ENCODE measurements at regions of chr12 and their contacts with region 1.

Region 1: GRCh38 chr12:27635349-27635972 is 60.8 kb upstream of the REP15 start:
- DNase-seq: peak; percentile 80
- ATAC-seq: peak; percentile 60
- H3K4me3 ChIP-seq: no peak overlapping the region
- H3K27ac ChIP-seq: 0 out of 2 replicates have a peak overlapping the region, but pooled peaks have one; percentile 5
- H3K4me1 ChIP-seq: 0 out of 2 replicates have a peak, but pooled peaks cover 2% of the 10 kb centered on the region
- H3K27me3 ChIP-seq: no peaks in the 10 kb centered on the region
- CTCF ChIP-seq: peak; percentile 84

Region 2: DNA sequence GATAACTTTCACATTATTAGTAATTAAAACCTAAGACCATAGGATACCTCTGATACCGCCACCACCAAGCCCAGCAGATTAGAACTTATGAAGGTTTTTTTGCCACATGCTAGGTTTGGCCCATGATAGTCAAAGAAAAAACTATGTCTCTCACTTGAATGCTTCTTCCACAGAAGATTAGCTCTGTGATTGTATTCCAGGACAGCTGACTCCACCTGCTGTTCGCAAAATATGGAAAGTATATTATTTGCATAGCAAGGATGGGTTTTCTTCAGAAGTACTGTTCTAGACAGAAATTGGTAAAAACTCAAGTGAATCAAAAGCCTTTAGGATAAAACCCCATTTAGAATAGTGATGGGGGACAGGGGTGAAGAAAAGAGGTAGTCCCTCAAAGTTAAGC is 69.3 kb before region 1 on chr12:
- CTCF ChIA-PET with region 1: no interaction called
- POLR2A ChIA-PET with region 1: interaction called, 3 read pairs
- intact Hi-C with region 1: loop called (anchors 2 kb)
- DNase-seq: peak; percentile 27
- ATAC-seq: peak; percentile 41
- H3K4me3 ChIP-seq: no peak overlapping the region
- H3K27ac ChIP-seq: no peak overlapping the region
- H3K4me1 ChIP-seq: peaks cover 13% of the 10 kb centered on the region
- H3K27me3 ChIP-seq: no peaks in the 10 kb centered on the region
- CTCF ChIP-seq: peak; percentile 51

Region 3: DNA sequence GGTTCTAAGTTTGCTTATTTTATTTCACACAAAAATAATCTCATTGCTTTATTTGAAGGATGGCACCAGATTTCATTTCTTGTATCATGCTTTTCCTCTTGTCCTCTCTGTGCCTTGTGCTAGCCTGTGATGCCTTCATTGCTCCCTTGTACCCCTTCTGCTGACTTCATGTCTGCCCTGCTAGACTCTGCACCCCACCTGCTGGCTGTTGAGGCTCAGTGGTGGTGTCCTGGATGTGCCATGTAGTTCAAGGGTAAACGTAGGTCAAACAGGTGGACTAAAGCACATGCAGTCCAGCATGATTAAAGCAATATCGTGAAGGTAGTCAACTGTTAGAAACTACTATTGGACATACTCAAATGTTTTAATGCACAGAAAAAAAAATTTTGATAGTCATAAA is 96.8 kb after region 1 on chr12:
- CTCF ChIA-PET with region 1: no interaction called
- POLR2A ChIA-PET with region 1: no interaction called
- intact Hi-C with region 1: no loop called
- DNase-seq: peak; percentile 51
- ATAC-seq: peak; percentile 63
- H3K4me3 ChIP-seq: no peak overlapping the region
- H3K27ac ChIP-seq: no peak overlapping the region
- H3K4me1 ChIP-seq: 0 out of 2 replicates have a peak, but pooled peaks cover 4% of the 10 kb centered on the region
- H3K27me3 ChIP-seq: no peaks in the 10 kb centered on the region
- CTCF ChIP-seq: peak; percentile 71